K562 (cell line): ENCODE measurements at regions of chr1 and their contacts with region 1.

Region 1: GRCh38 chr1:182889997-182890396 is 50.9 kb downstream of the DHX9 start:
- DNase-seq: peak in 2 of 4 experiments; percentile 16 to 24
- ATAC-seq: peak; percentile 21
- H3K4me3 ChIP-seq: no peak overlapping the region
- H3K27ac ChIP-seq: no peak overlapping the region
- H3K4me1 ChIP-seq: no peaks in the 10 kb centered on the region
- H3K27me3 ChIP-seq: no peaks in the 10 kb centered on the region
- CTCF ChIP-seq: no peak
- EP300 ChIP-seq: no peak
- POLR2A ChIP-seq: no peak
- RAD21 ChIP-seq: no peak

Region 2: DNA sequence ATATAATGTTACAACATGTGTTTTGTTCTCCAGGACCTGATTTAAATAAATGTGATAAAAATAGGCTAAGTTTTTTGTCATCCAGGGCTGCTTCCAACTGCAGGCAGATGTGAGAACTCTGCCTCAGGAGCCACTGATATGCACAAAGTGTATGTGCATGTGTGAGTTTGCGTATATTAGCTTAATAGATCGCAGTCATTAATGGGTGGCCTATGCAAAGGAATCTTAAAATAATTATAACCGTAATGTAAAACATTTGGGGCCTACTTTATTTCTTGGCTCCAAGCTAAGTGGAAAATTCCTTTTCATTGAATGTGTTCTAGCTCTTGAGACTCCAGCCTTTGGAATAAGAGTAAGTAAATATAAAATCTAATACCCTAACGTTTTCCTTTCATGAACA is 34.1 kb before region 1 on chr1:
- CTCF ChIA-PET with region 1: no interaction called
- POLR2A ChIA-PET with region 1: interaction called, 6 read pairs
- in situ Hi-C with region 1: no loop called
- intact Hi-C with region 1: loop called (anchors 5 kb)
- DNase-seq: no peak
- ATAC-seq: no peak
- H3K4me3 ChIP-seq: no peak overlapping the region
- H3K27ac ChIP-seq: no peak overlapping the region
- H3K4me1 ChIP-seq: no peaks in the 10 kb centered on the region
- H3K27me3 ChIP-seq: no peaks in the 10 kb centered on the region
- CTCF ChIP-seq: no peak
- EP300 ChIP-seq: no peak
- POLR2A ChIP-seq: no peak
- RAD21 ChIP-seq: no peak

Region 3: DNA sequence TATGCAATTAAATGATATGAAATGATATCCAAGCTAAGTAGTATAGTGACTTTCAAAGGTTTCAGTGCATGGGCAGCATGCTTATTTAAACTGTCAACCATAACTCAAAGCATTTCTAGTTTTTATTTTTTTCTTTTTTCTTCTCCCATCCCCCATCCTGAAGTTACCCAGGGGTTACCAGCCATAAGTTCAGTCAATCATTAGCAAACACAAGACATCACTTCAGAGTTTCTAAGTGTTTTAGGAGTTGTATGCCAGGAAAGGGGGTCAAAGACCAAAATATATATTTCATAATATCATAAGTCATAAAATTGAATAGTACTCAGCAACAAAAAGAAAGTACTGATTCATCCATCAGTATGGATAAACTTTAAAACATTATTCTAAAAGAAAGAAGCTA is 22.1 kb before region 1 on chr1:
- CTCF ChIA-PET with region 1: no interaction called
- POLR2A ChIA-PET with region 1: interaction called, 14 read pairs
- in situ Hi-C with region 1: no loop called
- intact Hi-C with region 1: no loop called
- DNase-seq: no peak
- ATAC-seq: no peak
- H3K4me3 ChIP-seq: no peak overlapping the region
- H3K27ac ChIP-seq: no peak overlapping the region
- H3K4me1 ChIP-seq: no peaks in the 10 kb centered on the region
- H3K27me3 ChIP-seq: no peaks in the 10 kb centered on the region
- CTCF ChIP-seq: no peak
- EP300 ChIP-seq: no peak
- POLR2A ChIP-seq: no peak
- RAD21 ChIP-seq: no peak

Region 4: DNA sequence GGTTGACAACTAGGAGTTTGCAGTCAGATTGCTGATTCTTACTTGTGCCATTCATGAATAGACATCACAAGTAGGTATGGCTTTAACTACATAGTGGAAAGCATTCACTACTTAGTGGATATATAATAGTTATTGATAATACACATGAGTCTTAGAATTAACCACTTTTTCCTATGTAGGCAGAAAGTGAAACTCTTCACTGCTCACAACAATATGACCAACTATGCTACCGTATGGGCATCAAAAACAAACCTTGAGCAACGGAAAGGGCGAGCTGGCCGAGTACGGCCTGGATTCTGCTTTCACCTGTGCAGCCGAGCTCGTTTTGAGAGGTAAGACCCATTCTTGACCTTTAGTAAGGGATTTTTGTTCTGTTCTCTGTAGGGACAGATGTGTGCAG is 12.2 kb before region 1 on chr1:
- CTCF ChIA-PET with region 1: no interaction called
- POLR2A ChIA-PET with region 1: interaction called, 19 read pairs
- in situ Hi-C with region 1: no loop called
- intact Hi-C with region 1: no loop called
- DNase-seq: no peak
- ATAC-seq: no peak
- H3K4me3 ChIP-seq: no peak overlapping the region
- H3K27ac ChIP-seq: no peak overlapping the region
- H3K4me1 ChIP-seq: no peaks in the 10 kb centered on the region
- H3K27me3 ChIP-seq: no peaks in the 10 kb centered on the region
- CTCF ChIP-seq: no peak
- EP300 ChIP-seq: no peak
- POLR2A ChIP-seq: no peak
- RAD21 ChIP-seq: no peak

Region 5: GRCh38 chr1:183139281-183139942 is 249.4 kb after region 1 on chr1:
- CTCF ChIA-PET with region 1: no interaction called
- POLR2A ChIA-PET with region 1: no interaction called
- in situ Hi-C with region 1: no loop called
- intact Hi-C with region 1: no loop called
- DNase-seq: no peak
- ATAC-seq: no peak
- H3K4me3 ChIP-seq: no peak overlapping the region
- H3K27ac ChIP-seq: no peak overlapping the region
- H3K4me1 ChIP-seq: no peaks in the 10 kb centered on the region
- H3K27me3 ChIP-seq: peaks cover 8 to 9% of the 10 kb centered on the region in 2 experiments; a peak in 4 of 5 replicates
- CTCF ChIP-seq: no peak
- EP300 ChIP-seq: no peak
- POLR2A ChIP-seq: no peak
- RAD21 ChIP-seq: no peak

Region 6: GRCh38 chr1:183368202-183369108 is 478.5 kb after region 1 on chr1:
- CTCF ChIA-PET with region 1: no interaction called
- POLR2A ChIA-PET with region 1: no interaction called
- in situ Hi-C with region 1: no loop called
- intact Hi-C with region 1: no loop called
- DNase-seq: no peak
- ATAC-seq: peak; percentile 71
- H3K4me3 ChIP-seq: no peak overlapping the region
- H3K27ac ChIP-seq: no peak overlapping the region
- H3K4me1 ChIP-seq: no peaks in the 10 kb centered on the region
- H3K27me3 ChIP-seq: peaks cover 23 to 52% of the 10 kb centered on the region in 2 experiments; a peak in 4 of 5 replicates
- CTCF ChIP-seq: peak in 2 of 3 experiments; percentile 11 to 29; a peak in 2 of 6 replicates
- EP300 ChIP-seq: no peak
- POLR2A ChIP-seq: no peak
- RAD21 ChIP-seq: 0 out of 4 replicates have a peak, but pooled peaks of 1 of the 2 experiments have one; percentile 19